Activated T-helper 1 cell treated with anti-CD3 and anti-CD28 coated beads, Interleukin-12 subunit alpha, Interleukin-12 subunit beta, Interleukin-2, Interleukin-4 antibody, amounts not matched to agents 30 ng/mL and 10 ng/mL and 1 ng/mL, durations not matched to agents 14 hours and 24 hours and 36 hours (primary cell): ENCODE measurements at regions of chr12 and their contacts with region 1.

Region 1: GRCh38 chr12:39372929-39373328 is 70.0 kb downstream of the KIF21A start:
- DNase-seq: peak; percentile 9
- H3K4me3 Mint-ChIP-seq: peak overlapping the region; percentile 0
- H3K27ac Mint-ChIP-seq: peak overlapping the region; percentile 70
- H3K4me1 Mint-ChIP-seq: peaks cover 28% of the 10 kb centered on the region
- H3K27me3 Mint-ChIP-seq: no peaks in the 10 kb centered on the region

Region 2: GRCh38 chr12:39186744-39187143 is 186.2 kb before region 1 on chr12:
- intact Hi-C with region 1: no loop called
- DNase-seq: no peak
- H3K4me3 Mint-ChIP-seq: no peak overlapping the region
- H3K27ac Mint-ChIP-seq: no peak overlapping the region
- H3K4me1 Mint-ChIP-seq: no peaks in the 10 kb centered on the region
- H3K27me3 Mint-ChIP-seq: no peaks in the 10 kb centered on the region

Region 3: GRCh38 chr12:39402922-39403321 is 30.0 kb after region 1 on chr12:
- intact Hi-C with region 1: loop called (anchors 2 kb)
- DNase-seq: no peak
- H3K4me3 Mint-ChIP-seq: no peak overlapping the region
- H3K27ac Mint-ChIP-seq: no peak overlapping the region
- H3K4me1 Mint-ChIP-seq: peaks cover 21% of the 10 kb centered on the region
- H3K27me3 Mint-ChIP-seq: no peaks in the 10 kb centered on the region

Region 4: DNA sequence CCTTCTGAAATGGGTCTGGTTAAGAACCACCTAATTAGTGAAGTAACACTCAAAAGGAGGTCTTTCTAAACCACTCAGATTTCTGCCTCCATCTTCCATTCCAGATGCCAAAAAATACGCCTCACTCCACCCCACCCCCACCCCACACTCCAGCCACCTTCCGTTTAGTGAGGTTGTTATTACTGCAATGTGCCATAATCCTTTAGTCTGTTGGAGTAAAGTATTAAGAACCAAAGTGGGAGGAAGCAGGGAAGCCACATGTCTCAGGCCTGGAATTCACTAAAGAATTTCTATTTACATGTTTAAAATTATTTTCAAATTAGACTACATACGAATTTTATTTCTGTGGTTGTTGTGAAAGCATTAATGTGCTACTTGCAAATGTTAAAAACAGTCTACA is 62.6 kb after region 1 on chr12:
- intact Hi-C with region 1: no loop called
- DNase-seq: no peak
- H3K4me3 Mint-ChIP-seq: no peak overlapping the region
- H3K27ac Mint-ChIP-seq: no peak overlapping the region
- H3K4me1 Mint-ChIP-seq: no peaks in the 10 kb centered on the region
- H3K27me3 Mint-ChIP-seq: peaks cover 2% of the 10 kb centered on the region

Region 5: GRCh38 chr12:39692258-39692853 is 319.4 kb after region 1 on chr12:
- intact Hi-C with region 1: loop called (anchors 2 kb)
- DNase-seq: no peak
- H3K4me3 Mint-ChIP-seq: no peak overlapping the region
- H3K27ac Mint-ChIP-seq: no peak overlapping the region
- H3K4me1 Mint-ChIP-seq: peaks cover 2% of the 10 kb centered on the region
- H3K27me3 Mint-ChIP-seq: peaks cover 4% of the 10 kb centered on the region

Region 6: DNA sequence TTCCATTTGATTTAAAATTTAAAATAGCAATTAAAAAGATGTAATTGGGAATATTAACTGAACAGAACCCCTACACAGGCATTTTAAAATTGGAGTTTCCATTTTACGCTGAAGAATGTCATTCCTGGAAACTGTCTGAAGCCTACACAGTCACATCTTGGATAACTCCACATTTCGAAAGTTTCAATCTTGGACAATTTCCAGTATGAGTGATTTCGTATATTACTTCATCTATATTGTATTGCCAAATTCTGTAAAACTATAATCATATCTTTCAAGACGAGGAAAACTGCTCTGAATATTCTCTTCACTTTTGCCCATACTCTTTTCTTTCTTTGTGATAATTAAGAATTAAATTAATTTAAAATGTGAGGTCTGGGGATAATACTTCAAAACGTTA is 440.8 kb after region 1 on chr12:
- intact Hi-C with region 1: loop called (anchors 10 kb)
- DNase-seq: no peak
- H3K4me3 Mint-ChIP-seq: no peak overlapping the region
- H3K27ac Mint-ChIP-seq: no peak overlapping the region
- H3K4me1 Mint-ChIP-seq: no peaks in the 10 kb centered on the region
- H3K27me3 Mint-ChIP-seq: peaks cover 2% of the 10 kb centered on the region